Right cardiac atrium (tissue), 5 donors: ENCODE measurements at regions of chr1 and their contacts with region 1.

Region 1: GRCh38 chr1:84887261-84887934 is 5.6 kb downstream of the LPAR3 start:
- DNase-seq: no peak
- ATAC-seq: no peak
- H3K4me3 ChIP-seq: no peak overlapping the region
- H3K27ac ChIP-seq: no peak overlapping the region
- H3K4me1 ChIP-seq: peaks cover 2% of the 10 kb centered on the region
- H3K27me3 ChIP-seq: no peaks in the 10 kb centered on the region

Region 2: GRCh38 chr1:84795966-84796600 is 91.3 kb before region 1 on chr1:
- intact Hi-C with region 1: loop called in 1 of 4 experiments (anchors 10 kb)
- DNase-seq: no peak
- ATAC-seq: peak; percentile 55 to 65
- H3K4me3 ChIP-seq: peak overlapping the region; percentile 2
- H3K27ac ChIP-seq: peak overlapping the region; percentile 48
- H3K4me1 ChIP-seq: no peaks in the 10 kb centered on the region
- H3K27me3 ChIP-seq: no peaks in the 10 kb centered on the region